T-cell (primary cell): ENCODE measurements at regions of chr14 and their contacts with region 1.

Region 1: DNA sequence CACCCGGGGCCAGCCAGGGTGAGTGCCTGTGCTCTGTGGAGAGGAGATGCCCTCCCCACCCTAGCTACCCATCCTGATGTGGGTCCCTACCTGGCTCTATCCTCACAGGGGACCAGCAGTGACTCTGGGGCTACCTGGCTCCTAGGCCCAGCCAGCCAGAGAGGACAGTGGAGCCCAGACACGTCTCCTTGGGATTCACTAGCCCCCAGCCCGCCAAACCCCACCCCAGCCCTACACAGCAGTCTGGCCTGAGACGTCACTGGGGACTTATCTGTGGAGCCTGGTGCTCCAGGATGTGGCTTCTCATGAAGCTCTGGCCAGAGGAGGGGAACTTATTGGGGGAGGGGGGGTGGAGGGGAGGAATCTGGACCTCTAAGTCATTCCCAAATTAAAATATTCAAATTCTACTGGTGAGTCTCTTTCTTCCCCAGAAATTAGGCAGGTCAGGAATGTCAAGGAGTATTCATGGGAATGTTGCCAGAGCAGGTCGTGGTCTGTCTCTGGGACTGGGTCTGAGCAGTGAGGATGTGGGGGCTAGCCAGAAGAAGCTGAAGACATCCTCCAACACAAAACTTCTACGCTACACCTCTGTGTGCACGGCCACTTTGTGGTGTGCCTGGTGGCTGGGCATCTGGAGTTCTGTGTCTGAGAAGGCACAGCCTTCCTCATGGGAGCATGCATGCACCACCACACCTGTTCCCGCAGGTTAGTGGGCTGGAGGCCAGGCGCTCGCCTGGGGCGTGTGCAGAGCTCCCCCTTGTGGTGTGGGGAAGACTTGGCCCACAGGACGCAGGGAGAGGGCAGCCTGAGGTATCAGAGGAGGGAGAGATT is 2.7 kb downstream of the CMTM5 start:
- DNase-seq: peak; percentile 25 to 81 (median 56)
- ATAC-seq: peak; percentile 86 to 95 (median 88)
- H3K4me3 ChIP-seq: no peak overlapping the region
- H3K4me3 Mint-ChIP-seq: no peak overlapping the region
- H3K27ac ChIP-seq: no peak overlapping the region
- H3K27ac Mint-ChIP-seq: no peak overlapping the region
- H3K4me1 ChIP-seq: no peaks in the 10 kb centered on the region
- H3K4me1 Mint-ChIP-seq: no peaks in the 10 kb centered on the region
- H3K27me3 ChIP-seq: peaks cover 0 to 55% of the 10 kb centered on the region in 2 experiments
- H3K27me3 Mint-ChIP-seq: peaks cover 9 to 18% of the 10 kb centered on the region in 2 donors

Region 2: DNA sequence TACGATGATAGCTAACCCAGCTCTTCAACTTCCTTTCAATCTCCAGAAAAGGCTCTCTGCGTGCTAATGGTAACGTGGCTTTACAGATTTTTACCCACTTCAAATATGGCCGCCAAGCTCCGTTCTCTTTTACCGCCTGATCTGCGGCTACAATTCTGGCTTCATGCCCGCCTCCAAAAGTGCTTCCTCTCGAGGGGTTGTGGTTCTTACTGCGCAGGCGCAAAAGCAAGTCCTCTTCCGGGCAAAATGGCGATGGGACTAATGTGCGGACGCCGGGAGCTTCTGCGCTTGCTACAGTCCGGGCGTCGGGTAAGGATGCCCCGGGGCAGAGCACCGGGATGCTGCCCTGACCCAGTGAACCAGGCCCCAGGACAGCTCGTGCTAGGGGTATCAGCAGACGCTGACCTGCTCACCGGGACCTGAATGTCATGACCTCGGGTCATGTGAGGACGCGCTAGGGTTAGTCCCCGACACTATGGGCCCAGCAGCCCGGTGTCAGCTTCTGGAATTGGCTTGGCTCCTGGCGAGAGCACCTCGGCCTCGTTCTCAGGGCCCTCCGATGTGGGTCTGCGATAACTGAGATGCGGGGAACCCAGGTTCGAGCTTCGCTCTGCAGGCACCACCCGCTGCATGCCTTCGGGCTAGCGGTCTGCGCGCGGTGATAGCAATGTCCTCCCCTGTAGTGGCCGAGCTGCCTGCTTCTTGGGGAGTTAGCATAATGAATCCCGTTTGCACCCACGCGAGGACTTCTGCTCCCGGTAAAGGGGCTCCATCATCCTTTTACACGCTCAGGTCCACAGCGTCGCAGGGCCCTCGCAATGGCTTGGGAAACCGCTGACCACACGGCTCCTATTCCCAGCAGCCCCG is 612.9 kb before region 1 on chr14 and contains the start of gene OXA1L:
- CTCF ChIA-PET with region 1: interaction called in 1 of 2 experiments, 10 read pairs
- POLR2A ChIA-PET with region 1: no interaction called
- DNase-seq: peak; percentile 89 to 99 (median 96)
- ATAC-seq: peak; percentile 90 to 95 (median 94)
- H3K4me3 ChIP-seq: peak within 1 kb of the TSS; percentile 92 to 100
- H3K4me3 Mint-ChIP-seq: peak within 1 kb of the TSS; percentile 85 to 91 (median 88)
- H3K27ac ChIP-seq: peak within 1 kb of the TSS; percentile 87
- H3K27ac Mint-ChIP-seq: peak within 1 kb of the TSS; percentile 93 to 98
- H3K4me1 ChIP-seq: peaks cover 16 to 18% of the 10 kb centered on the region in 2 experiments
- H3K4me1 Mint-ChIP-seq: peaks cover 33 to 41% (median 35%) of the 10 kb centered on the region in 3 donors
- H3K27me3 ChIP-seq: no peaks in the 10 kb centered on the region
- H3K27me3 Mint-ChIP-seq: no peaks in the 10 kb centered on the region
- total RNA-seq, gene OXA1L: 130 to 152 (median 136) TPM

Region 3: GRCh38 chr14:22781586-22781991 is 598.0 kb before region 1 on chr14:
- CTCF ChIA-PET with region 1: no interaction called
- POLR2A ChIA-PET with region 1: no interaction called
- DNase-seq: no peak
- ATAC-seq: no peak
- H3K4me3 ChIP-seq: no peak overlapping the region
- H3K4me3 Mint-ChIP-seq: no peak overlapping the region
- H3K27ac ChIP-seq: no peak overlapping the region
- H3K27ac Mint-ChIP-seq: peak overlapping the region in 1 of 2 donors; percentile 22
- H3K4me1 ChIP-seq: no peaks in the 10 kb centered on the region
- H3K4me1 Mint-ChIP-seq: no peaks in the 10 kb centered on the region
- H3K27me3 ChIP-seq: peaks cover 0 to 6% of the 10 kb centered on the region in 2 experiments
- H3K27me3 Mint-ChIP-seq: no peaks in the 10 kb centered on the region

Region 4: GRCh38 chr14:23327947-23328744 is 51.4 kb before region 1 on chr14:
- CTCF ChIA-PET with region 1: interaction called, 5 to 13 read pairs
- POLR2A ChIA-PET with region 1: no interaction called
- DNase-seq: peak in 31 of 35 experiments; percentile 16 to 84 (median 47)
- ATAC-seq: peak; percentile 61 to 81 (median 74)
- H3K4me3 ChIP-seq: no peak overlapping the region
- H3K4me3 Mint-ChIP-seq: no peak overlapping the region
- H3K27ac ChIP-seq: no peak overlapping the region
- H3K27ac Mint-ChIP-seq: no peak overlapping the region
- H3K4me1 ChIP-seq: peaks cover 0 to 2% of the 10 kb centered on the region in 2 experiments
- H3K4me1 Mint-ChIP-seq: peaks cover 2 to 6% (median 6%) of the 10 kb centered on the region in 3 donors
- H3K27me3 ChIP-seq: peaks cover 0 to 6% of the 10 kb centered on the region in 2 experiments
- H3K27me3 Mint-ChIP-seq: no peaks in the 10 kb centered on the region

Region 5: GRCh38 chr14:23704890-23705289 is 325.3 kb after region 1 on chr14:
- CTCF ChIA-PET with region 1: no interaction called
- POLR2A ChIA-PET with region 1: no interaction called
- DNase-seq: no peak
- ATAC-seq: no peak
- H3K4me3 ChIP-seq: no peak overlapping the region
- H3K4me3 Mint-ChIP-seq: no peak overlapping the region
- H3K27ac ChIP-seq: no peak overlapping the region
- H3K27ac Mint-ChIP-seq: no peak overlapping the region
- H3K4me1 ChIP-seq: no peaks in the 10 kb centered on the region
- H3K4me1 Mint-ChIP-seq: no peaks in the 10 kb centered on the region
- H3K27me3 ChIP-seq: peaks cover 0 to 9% of the 10 kb centered on the region in 2 experiments
- H3K27me3 Mint-ChIP-seq: peaks cover 18% of the 10 kb centered on the region in 2 donors